Posterior cingulate gyrus (tissue), 11 donors: ENCODE measurements at regions of chr11 and their contacts with region 1.

Region 1: DNA sequence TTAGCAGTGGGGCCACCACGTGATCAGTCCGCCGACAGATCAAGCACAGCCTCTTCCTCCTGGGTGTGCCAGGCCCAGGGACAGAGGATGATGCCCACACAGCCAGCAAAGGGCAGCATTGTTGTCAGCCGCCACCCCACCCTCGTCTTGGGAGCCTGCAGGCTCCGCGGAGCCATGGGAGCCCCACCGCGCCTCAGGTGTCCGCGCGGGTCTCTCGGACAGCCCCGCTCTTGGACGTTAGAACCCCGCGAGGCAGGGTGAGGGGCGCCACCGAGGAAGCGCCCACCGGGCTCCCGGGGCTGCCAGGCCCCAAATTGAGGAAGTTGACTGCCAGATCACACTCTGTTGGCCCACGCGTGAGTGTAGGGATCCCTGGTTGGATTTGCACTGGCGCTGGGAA is 83.9 kb upstream of the MS4A8 start:
- DNase-seq: no peak

Region 2: DNA sequence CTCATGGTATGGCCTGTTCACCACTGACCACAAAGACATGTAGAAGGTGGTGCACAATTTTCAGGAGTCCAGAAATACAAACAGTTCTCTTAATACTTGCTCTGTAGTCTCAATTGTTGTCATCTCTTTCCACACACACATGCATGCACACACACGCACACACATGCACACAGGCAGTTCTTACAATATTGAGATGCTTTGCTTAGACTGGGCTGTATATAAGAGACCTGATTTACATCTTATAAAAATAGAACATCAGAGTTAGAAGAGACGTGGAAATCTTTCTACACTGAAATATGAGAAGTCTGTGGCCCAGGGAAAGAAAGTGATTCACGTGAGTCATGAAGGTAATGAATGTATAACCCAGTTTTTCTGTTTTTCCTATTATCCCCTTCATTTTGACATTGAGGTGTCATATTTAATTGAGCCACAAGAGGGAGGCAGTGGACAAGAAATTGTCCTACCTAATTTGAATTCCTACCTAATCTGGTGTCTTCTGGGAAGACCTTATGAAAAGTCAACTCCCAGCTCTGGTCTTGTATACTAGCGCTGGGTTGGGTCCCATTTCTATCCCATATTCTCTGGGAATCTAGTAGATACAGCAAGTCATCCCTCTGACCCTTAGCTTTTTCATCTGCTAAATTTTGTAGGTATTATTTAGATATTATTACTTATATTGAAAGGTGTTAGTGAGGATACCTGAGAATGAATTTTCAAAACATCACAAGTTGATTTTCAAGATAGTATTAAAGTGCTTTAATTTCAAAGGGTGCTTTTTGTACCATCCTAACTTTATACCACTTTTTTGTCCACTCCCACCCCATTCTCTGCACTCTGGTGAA is 349.9 kb before region 1 on chr11:
- intact Hi-C with region 1: loop called (anchors 1 kb)
- DNase-seq: no peak

Region 3: DNA sequence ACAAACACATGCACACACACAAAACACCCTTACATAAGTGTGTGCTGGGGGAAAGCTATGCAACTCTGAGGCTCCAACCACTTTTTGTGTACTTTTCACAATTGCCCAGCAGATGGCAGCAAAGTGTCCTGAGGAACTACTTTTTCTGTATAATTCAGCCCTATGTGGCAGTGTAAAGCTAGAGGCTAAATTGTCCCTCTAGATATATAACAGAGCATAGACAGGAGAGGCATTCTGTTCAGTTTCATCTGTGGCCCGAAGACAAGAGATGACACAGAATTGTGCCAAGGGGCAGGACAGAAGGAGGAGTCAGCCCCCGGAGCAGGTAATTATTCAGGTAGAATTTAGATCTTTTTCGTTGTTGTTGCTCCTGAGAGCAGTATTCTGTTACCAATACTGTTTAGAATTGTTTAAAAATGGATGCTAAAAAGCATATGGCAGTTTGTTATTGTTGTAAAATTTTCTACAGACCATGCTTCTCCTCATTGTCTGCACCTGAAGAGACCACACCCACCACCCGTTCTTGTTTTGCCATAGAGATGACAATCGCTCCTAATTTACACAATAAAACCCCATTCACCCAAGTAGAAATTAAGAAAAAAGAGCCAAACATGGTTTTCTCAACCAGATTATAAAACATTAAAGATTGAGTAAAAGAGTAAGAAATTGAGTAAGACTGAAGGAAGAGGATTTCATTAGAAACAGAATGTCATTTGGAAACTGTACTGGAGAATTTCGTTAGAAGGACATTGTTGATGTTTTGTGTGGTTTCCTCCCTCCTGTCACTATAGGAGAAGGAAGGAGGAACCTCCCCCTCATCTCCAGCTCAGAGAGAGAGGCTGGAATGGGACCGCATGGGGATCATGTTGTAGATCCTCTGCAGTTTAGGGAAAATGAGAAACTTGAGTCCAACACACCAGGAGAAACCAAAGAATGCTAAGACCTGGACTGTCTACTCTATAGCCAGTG is 251.7 kb before region 1 on chr11:
- intact Hi-C with region 1: loop called (anchors 5 kb)
- DNase-seq: peak in 6 of 10 donors; percentile 19 to 86 (median 54)